Naive thymus-derived CD8-positive, alpha-beta T cell (primary cell): ENCODE measurements at regions of chr1 and their contacts with region 1.

Region 1: DNA sequence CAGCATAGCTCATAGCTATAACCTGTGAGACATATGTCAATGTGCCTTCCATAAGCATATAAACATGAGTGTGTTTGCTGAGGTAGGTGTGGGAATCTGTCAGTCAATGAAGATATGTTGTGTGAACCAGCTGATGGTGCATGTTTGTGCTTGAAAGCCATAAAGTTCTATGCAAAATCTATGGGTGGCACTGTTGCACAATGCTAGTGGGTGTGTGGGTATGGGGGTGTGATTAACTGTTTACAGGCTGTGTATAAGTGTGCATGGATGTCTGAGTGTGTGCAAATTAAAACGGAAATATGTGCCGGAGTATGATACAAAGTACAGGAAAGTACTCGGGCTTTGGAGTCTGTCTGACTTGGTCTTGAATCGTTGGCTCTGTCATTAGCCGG is 1.0 kb upstream of the ATP2B4 start:
- DNase-seq: peak in 9 of 10 donors; percentile 46 to 86 (median 72)
- ATAC-seq: peak; percentile 60 to 74
- H3K4me3 Mint-ChIP-seq: peak overlapping the region; percentile 84 to 99 (median 94)
- H3K27ac Mint-ChIP-seq: peak overlapping the region; percentile 63 to 97 (median 90)
- H3K4me1 Mint-ChIP-seq: peaks cover 28 to 56% (median 48%) of the 10 kb centered on the region in 4 donors
- H3K27me3 Mint-ChIP-seq: no peaks in the 10 kb centered on the region

Region 2: DNA sequence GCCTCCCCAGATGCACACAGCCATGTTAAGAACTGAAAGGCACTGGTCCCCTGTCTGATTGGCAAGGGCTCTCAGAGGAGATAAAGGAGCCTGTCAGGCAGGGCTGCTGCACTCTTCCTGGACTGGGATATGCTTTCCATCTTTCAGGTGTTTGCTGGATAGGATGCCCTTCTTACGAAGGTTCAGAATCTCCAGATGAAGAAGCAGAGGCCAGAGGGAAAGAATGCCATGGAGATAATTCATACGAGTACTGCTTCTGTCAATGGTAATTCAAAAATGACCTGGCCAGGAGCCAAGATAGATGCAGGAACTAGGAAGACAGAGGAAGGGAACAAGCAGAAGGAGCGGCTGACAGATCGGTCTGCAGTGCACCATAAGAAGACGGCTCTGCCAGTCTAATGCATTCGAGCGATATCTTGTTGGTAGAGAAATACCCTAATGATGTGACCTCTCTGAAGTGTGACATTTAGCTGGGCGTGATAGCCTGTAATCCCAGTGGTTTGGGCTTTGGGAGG is 15.6 kb before region 1 on chr1:
- POLR2A ChIA-PET with region 1: interaction called, 35 read pairs
- DNase-seq: no peak
- ATAC-seq: no peak
- H3K4me3 Mint-ChIP-seq: no peak overlapping the region
- H3K27ac Mint-ChIP-seq: peak overlapping the region in 7 of 10 donors; percentile 8 to 93 (median 60)
- H3K4me1 Mint-ChIP-seq: peaks cover 23 to 62% (median 56%) of the 10 kb centered on the region in 4 donors
- H3K27me3 Mint-ChIP-seq: no peaks in the 10 kb centered on the region

Region 3: DNA sequence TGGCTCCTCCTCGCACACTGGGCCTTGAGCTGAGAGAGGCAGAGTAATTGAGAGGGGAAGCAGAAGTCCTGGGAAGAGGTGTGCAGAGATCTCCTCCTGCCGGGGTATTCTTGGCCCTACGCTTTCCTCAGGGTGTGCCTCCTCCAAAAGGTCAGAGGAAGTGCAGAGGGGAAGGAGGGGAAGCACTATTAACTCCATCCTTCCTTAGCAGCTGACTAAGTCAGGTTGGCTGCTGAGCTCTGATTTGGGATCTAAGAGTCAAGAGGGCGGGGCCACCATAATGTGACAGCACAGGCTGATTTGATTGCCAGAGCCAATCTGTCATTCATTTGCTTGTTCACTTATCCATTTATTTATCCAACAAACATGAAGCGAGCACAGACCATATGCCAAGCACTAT is 13.3 kb after region 1 on chr1:
- POLR2A ChIA-PET with region 1: interaction called, 13 read pairs
- DNase-seq: no peak
- ATAC-seq: no peak
- H3K4me3 Mint-ChIP-seq: peak overlapping the region in 5 of 10 donors; percentile 7 to 24 (median 16)
- H3K27ac Mint-ChIP-seq: peak overlapping the region in 6 of 10 donors; percentile 1 to 83 (median 62)
- H3K4me1 Mint-ChIP-seq: peaks cover 25 to 56% (median 45%) of the 10 kb centered on the region in 4 donors
- H3K27me3 Mint-ChIP-seq: no peaks in the 10 kb centered on the region

Region 4: DNA sequence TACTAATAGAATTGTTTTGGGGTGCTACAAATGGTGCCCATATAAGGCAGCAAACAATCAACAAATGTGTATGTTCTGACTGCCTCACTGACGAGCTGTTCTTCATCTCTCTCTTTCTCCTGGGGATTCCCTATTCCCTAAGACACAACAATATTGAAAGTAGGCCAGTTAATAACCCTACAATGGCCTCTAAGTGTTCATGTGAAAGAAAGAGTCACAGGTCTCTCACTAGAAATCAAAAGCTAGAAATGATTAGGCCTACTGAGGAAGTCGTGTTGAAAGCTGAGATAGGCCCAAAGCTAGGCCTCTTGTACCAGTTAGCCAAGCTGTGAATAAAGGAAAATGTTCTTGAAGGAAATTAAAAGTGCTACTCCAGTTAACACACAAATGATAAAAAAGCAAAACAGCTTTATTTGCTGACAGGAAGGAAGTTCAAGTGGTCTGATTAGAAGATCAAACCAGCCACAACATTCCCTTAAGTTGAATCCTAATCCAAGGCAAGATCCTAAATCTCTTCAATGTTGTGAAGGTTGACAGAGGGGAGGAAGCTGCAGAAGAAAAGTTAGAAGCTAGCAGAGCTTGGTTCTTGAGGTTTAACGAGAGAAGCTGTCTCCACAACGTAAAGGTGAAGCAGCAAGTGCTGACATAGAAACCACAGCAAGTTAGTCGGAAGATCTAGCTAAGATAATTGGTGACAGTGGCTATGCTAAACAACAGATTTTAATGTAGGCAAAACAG is 27.3 kb after region 1 on chr1:
- POLR2A ChIA-PET with region 1: interaction called, 26 read pairs
- DNase-seq: peak in 3 of 10 donors; percentile 55 to 62 (median 60)
- ATAC-seq: peak; percentile 52 to 68
- H3K4me3 Mint-ChIP-seq: peak overlapping the region in 9 of 10 donors; percentile 23 to 72 (median 46)
- H3K27ac Mint-ChIP-seq: peak overlapping the region; percentile 84 to 94 (median 90)
- H3K4me1 Mint-ChIP-seq: peaks cover 24 to 90% (median 56%) of the 10 kb centered on the region in 4 donors
- H3K27me3 Mint-ChIP-seq: no peaks in the 10 kb centered on the region

Region 5: DNA sequence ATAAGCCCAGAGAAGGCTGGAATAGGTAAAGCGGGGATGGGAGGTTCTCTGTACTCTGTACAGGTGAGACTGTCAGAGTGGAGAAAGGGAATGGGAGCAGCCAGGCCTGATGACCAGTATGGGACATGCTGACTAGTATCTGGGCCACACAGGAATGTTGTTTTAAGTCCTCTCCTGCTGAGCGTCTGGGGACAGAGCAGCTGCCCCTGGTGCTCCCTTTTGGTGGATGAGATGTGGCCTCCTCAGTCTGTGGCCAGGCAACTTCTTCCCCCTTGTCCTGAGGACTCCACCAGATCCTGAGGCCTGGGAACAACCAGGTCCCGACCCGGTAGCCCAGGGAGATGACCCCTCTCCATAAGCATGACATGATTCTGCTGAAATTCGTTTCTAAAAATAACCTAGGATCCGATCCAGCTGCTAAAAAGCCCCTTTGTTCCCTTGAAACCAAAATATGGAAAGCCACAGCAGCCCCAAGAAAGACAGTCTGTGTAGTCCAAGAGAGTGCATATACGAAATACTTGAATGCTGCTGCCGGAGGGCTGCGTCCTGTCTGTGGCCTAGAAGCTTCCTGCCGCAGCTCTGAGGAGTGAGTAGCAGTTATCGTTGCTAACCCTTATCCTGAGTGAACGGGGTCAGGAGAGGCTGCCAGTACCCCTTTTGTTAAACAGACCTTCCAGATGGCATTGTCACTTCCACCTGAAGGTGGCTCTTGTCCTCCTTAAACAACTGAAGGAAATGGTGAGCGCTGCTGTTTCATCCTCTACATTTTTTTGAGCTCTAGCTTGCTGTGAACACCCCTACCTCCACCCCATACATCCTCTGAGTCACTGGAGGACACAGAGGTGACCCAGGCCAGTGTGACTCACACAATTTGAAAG is 48.2 kb after region 1 on chr1:
- POLR2A ChIA-PET with region 1: interaction called, 50 read pairs
- DNase-seq: peak in 9 of 10 donors; percentile 43 to 85 (median 72)
- ATAC-seq: peak; percentile 88 to 92
- H3K4me3 Mint-ChIP-seq: peak overlapping the region; percentile 59 to 87 (median 77)
- H3K27ac Mint-ChIP-seq: peak overlapping the region; percentile 87 to 96 (median 92)
- H3K4me1 Mint-ChIP-seq: peaks cover 27 to 77% (median 62%) of the 10 kb centered on the region in 4 donors
- H3K27me3 Mint-ChIP-seq: no peaks in the 10 kb centered on the region

Region 6: DNA sequence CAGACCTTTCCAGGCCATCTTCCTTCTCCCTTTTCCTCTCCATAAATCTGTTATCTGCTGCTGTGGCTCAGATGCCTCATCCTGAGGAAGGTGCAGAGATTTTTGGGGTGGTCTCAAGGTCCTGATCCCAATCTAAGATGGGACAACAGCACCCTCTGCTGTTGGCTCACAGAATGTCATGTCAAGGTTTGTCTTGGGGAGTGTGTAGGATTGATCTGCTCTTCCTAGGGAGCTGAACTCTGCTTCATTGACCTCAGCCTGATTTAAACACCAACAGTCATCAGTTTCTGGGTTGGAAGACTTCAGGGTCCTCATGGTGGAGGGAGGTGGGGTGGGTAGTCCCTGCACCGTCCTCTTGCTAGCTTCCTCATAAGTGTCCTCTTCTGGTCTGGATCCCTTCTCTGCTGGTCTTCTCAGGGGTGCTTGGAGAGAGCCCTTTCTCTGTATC is 76.5 kb after region 1 on chr1:
- POLR2A ChIA-PET with region 1: interaction called, 19 read pairs
- DNase-seq: peak; percentile 37 to 81 (median 66)
- ATAC-seq: peak; percentile 61 to 78
- H3K4me3 Mint-ChIP-seq: no peak overlapping the region
- H3K27ac Mint-ChIP-seq: peak overlapping the region in 9 of 10 donors; percentile 14 to 90 (median 51)
- H3K4me1 Mint-ChIP-seq: peaks cover 3 to 10% (median 5%) of the 10 kb centered on the region in 4 donors
- H3K27me3 Mint-ChIP-seq: no peaks in the 10 kb centered on the region

Region 7: GRCh38 chr1:203765029-203765837 is 139.6 kb after region 1 on chr1 and contains the start of gene LAX1:
- POLR2A ChIA-PET with region 1: interaction called, 10 read pairs
- DNase-seq: peak; percentile 28 to 86 (median 68)
- ATAC-seq: peak; percentile 90 to 92
- H3K4me3 Mint-ChIP-seq: peak within 1 kb of the TSS; percentile 91 to 99 (median 96)
- H3K27ac Mint-ChIP-seq: peak within 1 kb of the TSS; percentile 94 to 99 (median 98)
- H3K4me1 Mint-ChIP-seq: peaks cover 20 to 69% (median 65%) of the 10 kb centered on the region in 4 donors
- H3K27me3 Mint-ChIP-seq: no peaks in the 10 kb centered on the region
- polyA plus RNA-seq, gene LAX1: 18.1 to 29.2 (median 18.4) TPM